GM12878 (cell line): ENCODE measurements at regions of chr17 and their contacts with region 1.

Region 1: DNA sequence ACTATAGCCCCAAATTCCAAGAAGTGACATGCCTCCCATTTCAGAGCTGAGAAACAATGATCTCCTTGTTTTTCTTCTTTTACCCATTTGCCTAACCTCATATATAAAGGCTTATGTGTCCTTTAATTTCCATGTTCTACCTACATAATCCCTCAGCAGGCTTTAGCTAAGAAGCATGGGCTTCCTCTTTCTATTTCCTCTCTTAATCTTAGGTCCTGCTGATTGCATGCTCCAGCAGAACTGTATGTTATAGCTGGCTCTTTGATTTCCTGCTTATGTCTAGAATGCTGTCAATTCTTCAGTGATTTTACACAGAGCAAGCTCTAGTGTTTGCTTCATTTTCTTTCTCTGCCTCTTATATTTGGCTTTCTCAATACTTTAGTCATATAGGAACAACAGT is 151.7 kb upstream of the COX10 start:
- DNase-seq: no peak
- ATAC-seq: no peak
- H3K4me3 ChIP-seq: no peak overlapping the region
- H3K27ac ChIP-seq: no peak overlapping the region
- H3K4me1 ChIP-seq: no peaks in the 10 kb centered on the region
- H3K27me3 ChIP-seq: no peaks in the 10 kb centered on the region
- CTCF ChIP-seq: no peak
- EP300 ChIP-seq: no peak
- POLR2A ChIP-seq: no peak
- RAD21 ChIP-seq: no peak

Region 2: DNA sequence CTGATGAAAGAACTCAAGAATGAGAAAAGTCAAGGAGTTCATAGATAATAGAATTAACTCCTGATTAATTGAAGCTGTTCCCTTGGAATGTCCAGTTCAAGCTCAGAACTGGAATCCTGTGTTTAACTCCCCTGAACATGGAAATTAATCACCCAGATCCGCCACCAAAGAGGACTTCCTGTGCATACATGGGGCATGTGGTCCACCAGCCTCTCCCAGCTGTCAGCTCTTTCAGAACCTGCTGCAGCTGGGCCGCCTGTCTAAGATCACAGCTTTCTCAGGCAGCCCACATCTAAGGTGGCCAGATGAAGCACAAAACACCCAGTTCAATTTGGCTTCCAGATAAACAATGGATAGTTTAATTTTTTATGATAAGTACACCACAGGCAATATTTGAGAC is 52.0 kb before region 1 on chr17:
- CTCF ChIA-PET with region 1: no interaction called
- POLR2A ChIA-PET with region 1: no interaction called
- RAD21 ChIA-PET with region 1: no interaction called
- SMC1A ChIA-PET with region 1: no interaction called
- in situ Hi-C with region 1: loop called (anchors 5 kb)
- intact Hi-C with region 1: no loop called
- DNase-seq: no peak
- ATAC-seq: no peak
- H3K4me3 ChIP-seq: no peak overlapping the region
- H3K27ac ChIP-seq: no peak overlapping the region
- H3K4me1 ChIP-seq: no peaks in the 10 kb centered on the region
- H3K27me3 ChIP-seq: no peaks in the 10 kb centered on the region
- CTCF ChIP-seq: no peak
- EP300 ChIP-seq: no peak
- POLR2A ChIP-seq: no peak
- RAD21 ChIP-seq: no peak

Region 3: DNA sequence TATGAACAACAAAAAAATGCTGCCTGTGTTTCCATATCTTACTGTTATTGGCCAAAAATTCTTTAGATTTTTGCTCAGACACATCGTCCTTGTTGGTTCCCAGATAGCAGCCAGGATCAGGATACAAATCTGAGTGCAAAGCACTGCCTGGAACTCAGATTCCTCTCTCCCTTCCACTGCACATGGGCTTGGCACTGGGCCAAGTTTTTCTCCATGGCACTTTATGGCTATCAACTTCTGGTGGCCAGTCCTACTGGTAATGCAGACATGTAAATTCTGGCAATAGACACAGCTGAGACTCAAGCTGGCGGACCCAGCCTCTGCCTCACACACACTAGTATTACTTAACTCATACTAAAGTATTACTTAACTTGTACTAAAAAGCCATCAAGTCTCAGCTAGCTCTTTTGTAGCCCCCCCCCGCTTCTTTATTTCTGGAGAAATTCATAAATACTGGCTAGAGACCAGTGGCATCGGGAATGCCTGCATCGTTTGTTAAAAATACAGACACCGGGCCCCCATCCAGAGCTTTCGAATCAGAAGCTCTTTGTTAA is 29.5 kb before region 1 on chr17:
- CTCF ChIA-PET with region 1: no interaction called
- POLR2A ChIA-PET with region 1: no interaction called
- RAD21 ChIA-PET with region 1: no interaction called
- SMC1A ChIA-PET with region 1: no interaction called
- in situ Hi-C with region 1: no loop called
- intact Hi-C with region 1: no loop called
- DNase-seq: no peak
- ATAC-seq: no peak
- H3K4me3 ChIP-seq: no peak overlapping the region
- H3K27ac ChIP-seq: no peak overlapping the region
- H3K4me1 ChIP-seq: no peaks in the 10 kb centered on the region
- H3K27me3 ChIP-seq: no peaks in the 10 kb centered on the region
- CTCF ChIP-seq: no peak
- EP300 ChIP-seq: no peak
- POLR2A ChIP-seq: no peak
- RAD21 ChIP-seq: no peak